GM10248 (cell line): ENCODE measurements at regions of chr18 and their contacts with region 1.

Region 1: DNA sequence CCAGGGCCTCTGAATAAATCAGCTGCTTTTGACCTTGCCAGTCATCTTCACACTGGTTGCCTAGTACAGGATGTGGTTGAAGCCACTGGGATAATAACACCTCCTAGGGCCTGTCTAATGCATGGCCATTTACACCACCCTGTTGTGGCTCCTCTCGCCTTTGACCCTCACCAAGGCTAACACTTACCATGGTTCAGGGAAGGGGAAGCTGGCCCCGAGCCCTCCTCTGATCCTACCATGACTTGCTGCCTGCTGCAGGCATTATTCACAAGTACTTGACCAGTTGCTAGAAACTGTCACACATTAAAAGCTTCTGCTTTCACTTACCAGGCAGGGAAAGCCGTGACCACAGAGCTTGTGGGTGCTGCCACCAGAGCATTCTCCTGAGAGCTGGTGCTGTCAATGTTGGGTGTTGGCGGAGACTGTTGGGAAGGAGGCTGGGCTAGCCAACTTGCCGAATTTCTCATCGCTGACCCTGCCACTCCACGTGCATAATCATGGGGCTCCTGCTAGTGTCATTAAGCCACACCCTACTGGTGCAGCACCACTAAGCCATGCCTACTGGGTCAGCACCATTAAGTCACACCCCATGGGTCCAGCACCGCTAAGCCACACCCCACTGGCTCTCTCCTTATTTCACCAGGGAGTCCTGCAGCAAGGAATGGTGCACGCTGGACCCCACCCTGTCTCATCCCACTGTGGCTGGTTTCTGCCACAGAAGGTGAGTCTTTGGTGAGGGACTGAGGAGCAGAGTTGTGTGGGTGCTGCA is 47.0 kb upstream of the TTC39C start:
- DNase-seq: no peak
- CTCF ChIP-seq: no peak

Region 2: GRCh38 chr18:23540867-23541266 is 426.6 kb before region 1 on chr18:
- CTCF ChIA-PET with region 1: no interaction called
- POLR2A ChIA-PET with region 1: no interaction called
- DNase-seq: peak; percentile 61
- CTCF ChIP-seq: no peak

Region 3: GRCh38 chr18:23982155-23983079 is 14.9 kb after region 1 on chr18:
- CTCF ChIA-PET with region 1: interaction called, 13 read pairs
- POLR2A ChIA-PET with region 1: no interaction called
- DNase-seq: no peak
- CTCF ChIP-seq: no peak

Region 4: GRCh38 chr18:23992941-23993280 is 25.4 kb after region 1 on chr18:
- CTCF ChIA-PET with region 1: no interaction called
- POLR2A ChIA-PET with region 1: no interaction called
- DNase-seq: no peak
- CTCF ChIP-seq: no peak

Region 5: GRCh38 chr18:24176727-24177416 is 209.4 kb after region 1 on chr18:
- CTCF ChIA-PET with region 1: no interaction called
- POLR2A ChIA-PET with region 1: no interaction called
- DNase-seq: peak; percentile 66
- CTCF ChIP-seq: peak; percentile 79